IMR-90 (cell line): ENCODE measurements at regions of chr16 and their contacts with region 1.

Region 1: DNA sequence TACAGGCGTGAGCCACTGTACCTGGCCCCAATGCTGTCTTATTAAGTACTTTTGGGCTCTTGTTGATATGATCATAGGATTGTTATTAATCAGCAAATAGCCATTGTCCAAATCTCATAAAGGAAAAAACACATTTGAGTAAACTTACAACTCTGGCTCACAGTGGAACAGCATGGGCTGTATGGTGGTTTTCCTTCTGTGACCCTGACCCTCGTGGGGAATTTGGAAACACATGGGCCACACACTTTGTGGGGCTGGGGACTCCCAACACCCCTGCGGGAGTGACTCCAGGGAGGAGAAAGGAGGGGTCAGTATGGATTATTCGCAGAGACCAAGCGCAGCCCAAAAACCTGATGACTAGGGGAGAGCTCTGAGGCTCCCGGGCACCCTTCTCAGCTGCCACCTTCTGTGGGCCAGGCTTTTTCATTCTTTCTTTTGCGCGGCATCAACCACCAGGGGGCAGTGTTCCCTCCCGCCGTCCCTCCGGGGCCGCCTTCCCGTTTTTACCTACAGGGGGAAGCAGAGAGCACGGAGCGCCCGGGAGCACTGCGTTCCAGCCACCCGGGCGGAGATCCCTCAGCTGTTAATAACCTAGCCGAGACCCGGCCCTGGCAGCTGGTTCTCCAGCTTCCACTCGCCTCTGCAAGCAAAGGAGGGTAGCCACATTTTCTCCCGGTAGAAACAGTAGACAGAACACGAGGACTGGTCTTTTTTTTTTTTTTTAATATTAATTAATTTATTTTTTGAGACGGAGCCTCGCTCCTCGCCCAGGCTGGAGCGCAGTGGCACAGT is 9.7 kb downstream of the TSNAXIP1 start:
- DNase-seq: peak; percentile 47
- ATAC-seq: peak; percentile 99
- H3K4me3 ChIP-seq: no peak overlapping the region
- H3K27ac ChIP-seq: no peak overlapping the region
- H3K4me1 ChIP-seq: no peaks in the 10 kb centered on the region
- H3K27me3 ChIP-seq: 0 out of 2 replicates have a peak, but pooled peaks cover 2% of the 10 kb centered on the region
- CTCF ChIP-seq: peak; percentile 100; the same call in 1 of the 2 replicates
- POLR2A ChIP-seq: no peak
- RAD21 ChIP-seq: peak; percentile 87

Region 2: DNA sequence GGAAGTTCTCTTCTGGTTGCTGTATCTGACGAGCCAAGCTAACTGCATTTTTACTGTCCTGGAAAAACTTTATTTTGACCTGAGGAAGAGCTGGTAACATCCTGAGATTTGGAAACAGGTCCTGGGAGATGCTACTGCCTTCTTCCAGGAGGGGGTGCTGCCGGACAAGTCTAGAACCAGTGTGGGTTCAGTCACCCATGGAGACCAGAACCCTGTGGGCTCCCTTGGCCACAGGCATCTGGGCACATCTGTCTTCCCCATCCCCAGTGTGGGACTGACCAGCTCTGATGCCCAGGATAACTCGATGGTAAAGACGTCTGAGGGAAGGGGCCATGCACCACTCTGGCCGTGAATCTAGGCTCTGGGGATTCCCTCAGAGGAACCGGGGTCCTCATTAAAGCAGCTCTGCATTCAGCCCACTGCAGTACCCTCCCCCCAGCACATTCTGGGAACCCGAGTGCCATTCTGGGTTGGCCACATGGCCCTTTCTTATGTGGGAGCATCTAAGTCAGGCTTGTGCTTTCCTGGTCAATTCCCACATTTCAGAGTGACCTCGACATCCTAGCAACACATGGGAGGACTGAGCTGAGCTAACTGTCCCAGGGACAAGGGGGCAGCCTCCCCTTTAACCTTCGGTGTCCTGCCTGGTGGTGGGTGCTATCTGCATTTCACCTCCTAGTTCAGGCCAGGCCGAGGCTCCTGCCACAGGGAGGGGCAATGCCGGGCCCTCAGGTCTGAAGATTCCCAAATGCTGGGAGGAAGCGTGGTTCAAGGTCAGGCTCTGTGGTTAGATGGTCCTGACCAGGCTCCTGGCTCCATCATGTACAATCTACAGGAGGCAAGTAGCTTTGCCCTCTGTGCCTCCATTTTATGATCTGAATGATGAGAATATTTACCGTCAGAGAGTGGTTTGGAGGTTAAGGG is 143.4 kb before region 1 on chr16:
- CTCF ChIA-PET with region 1: interaction called, 7 read pairs
- POLR2A ChIA-PET with region 1: no interaction called
- dilution Hi-C with region 1: no loop called
- in situ Hi-C with region 1: no loop called
- intact Hi-C with region 1: loop called (anchors 1 kb)
- DNase-seq: peak; percentile 67
- ATAC-seq: peak; percentile 60
- H3K4me3 ChIP-seq: no peak overlapping the region
- H3K27ac ChIP-seq: no peak overlapping the region
- H3K4me1 ChIP-seq: no peaks in the 10 kb centered on the region
- H3K27me3 ChIP-seq: no peaks in the 10 kb centered on the region
- CTCF ChIP-seq: peak; percentile 81
- POLR2A ChIP-seq: no peak
- RAD21 ChIP-seq: peak; percentile 85

Region 3: GRCh38 chr16:67841764-67842508 is 25.5 kb after region 1 on chr16 and contains the start of gene THAP11:
- CTCF ChIA-PET with region 1: interaction called, 4 read pairs
- POLR2A ChIA-PET with region 1: no interaction called
- dilution Hi-C with region 1: no loop called
- in situ Hi-C with region 1: no loop called
- intact Hi-C with region 1: loop called (anchors 2 kb)
- DNase-seq: peak; percentile 92
- ATAC-seq: peak; percentile 67
- H3K4me3 ChIP-seq: peak within 1 kb of the TSS; percentile 69
- H3K27ac ChIP-seq: peak within 1 kb of the TSS; percentile 91
- H3K4me1 ChIP-seq: peaks cover 13% of the 10 kb centered on the region
- H3K27me3 ChIP-seq: no peaks in the 10 kb centered on the region
- CTCF ChIP-seq: peak; percentile 96
- POLR2A ChIP-seq: peak; percentile 52; the same call in 1 of the 2 replicates
- RAD21 ChIP-seq: peak; percentile 50
- total RNA-seq, gene THAP11: 13.3 and 13.9 TPM in 2 replicates

Region 4: DNA sequence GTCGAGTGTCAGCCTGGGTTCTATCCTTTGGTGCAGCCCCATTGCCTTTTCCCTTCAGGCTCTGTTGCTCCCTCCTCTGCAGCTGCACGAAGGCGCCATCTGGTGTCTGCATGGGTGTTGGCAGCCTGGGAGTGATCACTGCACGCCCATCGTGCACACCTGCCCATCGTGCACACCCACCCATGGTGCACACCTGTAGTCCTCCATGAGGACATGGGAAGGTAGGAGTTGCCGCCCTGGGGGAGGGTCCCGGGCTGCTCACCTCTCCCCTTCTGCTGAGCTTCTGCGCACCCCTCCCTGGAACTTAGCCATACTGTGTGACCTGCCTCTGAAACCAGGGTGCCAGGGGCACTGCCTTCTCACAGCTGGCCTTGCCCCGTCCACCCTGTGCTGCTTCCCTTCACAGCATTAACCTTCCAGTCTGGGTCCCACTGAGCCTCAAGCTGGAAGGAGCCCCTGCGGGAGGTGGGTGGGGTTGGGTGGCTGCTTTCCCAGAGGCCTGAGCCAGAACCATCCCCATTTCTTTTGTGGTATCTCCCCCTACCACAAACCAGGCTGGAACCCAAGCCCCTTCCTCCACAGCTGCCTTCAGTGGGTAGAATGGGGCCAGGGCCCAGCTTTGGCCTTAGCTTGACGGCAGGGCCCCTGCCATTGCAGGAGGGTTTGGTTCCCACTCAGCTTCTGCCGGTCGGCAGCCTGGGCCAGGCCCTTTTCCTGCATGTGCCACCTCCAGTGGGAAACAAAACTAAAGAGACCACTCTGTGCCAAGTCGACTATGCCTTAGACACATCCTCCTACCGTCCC is 112.3 kb after region 1 on chr16:
- CTCF ChIA-PET with region 1: interaction called, 4 read pairs
- POLR2A ChIA-PET with region 1: interaction called, 3 read pairs
- dilution Hi-C with region 1: no loop called
- in situ Hi-C with region 1: loop called (anchors 5 kb)
- intact Hi-C with region 1: loop called (anchors 1 kb)
- DNase-seq: peak; percentile 43
- ATAC-seq: peak; percentile 92
- H3K4me3 ChIP-seq: no peak overlapping the region
- H3K27ac ChIP-seq: no peak overlapping the region
- H3K4me1 ChIP-seq: no peaks in the 10 kb centered on the region
- H3K27me3 ChIP-seq: no peaks in the 10 kb centered on the region
- CTCF ChIP-seq: peak; percentile 87
- POLR2A ChIP-seq: no peak
- RAD21 ChIP-seq: peak; percentile 94

Region 5: GRCh38 chr16:68040507-68041288 is 224.3 kb after region 1 on chr16:
- CTCF ChIA-PET with region 1: interaction called, 5 read pairs
- POLR2A ChIA-PET with region 1: no interaction called
- dilution Hi-C with region 1: no loop called
- in situ Hi-C with region 1: no loop called
- intact Hi-C with region 1: loop called (anchors 1 kb)
- DNase-seq: peak; percentile 51
- ATAC-seq: peak; percentile 92
- H3K4me3 ChIP-seq: no peak overlapping the region
- H3K27ac ChIP-seq: no peak overlapping the region
- H3K4me1 ChIP-seq: no peaks in the 10 kb centered on the region
- H3K27me3 ChIP-seq: no peaks in the 10 kb centered on the region
- CTCF ChIP-seq: peak; percentile 85
- POLR2A ChIP-seq: no peak
- RAD21 ChIP-seq: peak; percentile 86